Activated CD4-positive, alpha-beta memory T cell treated with anti-CD3 and anti-CD28 coated beads, Interleukin-2, amount 10 ng/mL, durations not matched to agents 7 days and 5 days (primary cell): ENCODE measurements at regions of chr4 and their contacts with region 1.

Region 1: DNA sequence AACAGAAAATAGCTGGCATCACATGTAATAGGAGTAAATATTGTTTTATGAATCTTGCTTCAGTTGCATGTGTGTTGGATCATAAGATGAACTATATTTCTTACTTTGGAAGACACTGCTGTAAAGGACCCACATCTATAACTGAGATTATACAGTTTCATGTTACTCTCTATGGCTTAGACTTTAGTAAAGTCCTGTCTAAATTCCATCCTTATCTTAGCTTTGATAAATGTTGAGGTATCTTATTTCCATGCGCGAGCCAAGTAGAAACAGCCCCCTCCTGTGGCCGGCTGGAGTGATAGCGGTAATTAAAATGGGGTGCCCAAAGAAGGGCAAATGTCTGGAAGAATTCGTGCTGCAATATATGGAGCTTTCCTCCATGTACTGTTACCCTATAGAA is 43.0 kb downstream of the CCDC158 start:
- DNase-seq: peak; percentile 64
- H3K4me3 Mint-ChIP-seq: no peak overlapping the region
- H3K27ac Mint-ChIP-seq: no peak overlapping the region
- H3K4me1 Mint-ChIP-seq: no peaks in the 10 kb centered on the region
- H3K27me3 Mint-ChIP-seq: peaks cover 3% of the 10 kb centered on the region

Region 2: GRCh38 chr4:76179398-76180318 is 198.3 kb before region 1 on chr4:
- CTCF ChIA-PET with region 1: interaction called, 238 read pairs
- POLR2A ChIA-PET with region 1: interaction called, 3 read pairs
- DNase-seq: peak; percentile 84
- H3K4me3 Mint-ChIP-seq: no peak overlapping the region
- H3K27ac Mint-ChIP-seq: no peak overlapping the region
- H3K4me1 Mint-ChIP-seq: no peaks in the 10 kb centered on the region
- H3K27me3 Mint-ChIP-seq: no peaks in the 10 kb centered on the region

Region 3: GRCh38 chr4:76213415-76214176 is 164.3 kb before region 1 on chr4 and contains the start of gene SCARB2:
- CTCF ChIA-PET with region 1: interaction called, 10 read pairs
- POLR2A ChIA-PET with region 1: interaction called, 3 read pairs
- DNase-seq: peak; percentile 76
- H3K4me3 Mint-ChIP-seq: peak within 1 kb of the TSS; percentile 79
- H3K27ac Mint-ChIP-seq: peak within 1 kb of the TSS; percentile 61
- H3K4me1 Mint-ChIP-seq: peaks cover 34% of the 10 kb centered on the region
- H3K27me3 Mint-ChIP-seq: no peaks in the 10 kb centered on the region
- total RNA-seq, gene SCARB2: 22.3 to 23.2 TPM

Region 4: GRCh38 chr4:76251441-76252270 is 126.3 kb before region 1 on chr4 and contains the start of gene FAM47E:
- CTCF ChIA-PET with region 1: interaction called, 13 read pairs
- POLR2A ChIA-PET with region 1: no interaction called
- DNase-seq: peak; percentile 49
- H3K4me3 Mint-ChIP-seq: peak within 1 kb of the TSS; percentile 70
- H3K27ac Mint-ChIP-seq: no peak within 1 kb of the TSS
- H3K4me1 Mint-ChIP-seq: peaks cover 10% of the 10 kb centered on the region
- H3K27me3 Mint-ChIP-seq: peaks cover 69% of the 10 kb centered on the region
- total RNA-seq, gene FAM47E: not detected

Region 5: GRCh38 chr4:76305971-76306881 is 71.7 kb before region 1 on chr4 and contains the start of gene STBD1:
- CTCF ChIA-PET with region 1: interaction called, 31 read pairs
- POLR2A ChIA-PET with region 1: interaction called, 4 read pairs
- DNase-seq: peak; percentile 55
- H3K4me3 Mint-ChIP-seq: peak within 1 kb of the TSS; percentile 78
- H3K27ac Mint-ChIP-seq: peak within 1 kb of the TSS; percentile 84
- H3K4me1 Mint-ChIP-seq: peaks cover 49% of the 10 kb centered on the region
- H3K27me3 Mint-ChIP-seq: no peaks in the 10 kb centered on the region
- total RNA-seq, gene STBD1: 5.5 to 5.8 TPM

Region 6: GRCh38 chr4:76354517-76355473 is 23.1 kb before region 1 on chr4:
- CTCF ChIA-PET with region 1: interaction called, 11 read pairs
- POLR2A ChIA-PET with region 1: no interaction called
- DNase-seq: peak; percentile 66
- H3K4me3 Mint-ChIP-seq: peak overlapping the region; percentile 5
- H3K27ac Mint-ChIP-seq: peak overlapping the region; percentile 10
- H3K4me1 Mint-ChIP-seq: peaks cover 22% of the 10 kb centered on the region
- H3K27me3 Mint-ChIP-seq: peaks cover 15% of the 10 kb centered on the region

Region 7: GRCh38 chr4:76388160-76388908 is 10.4 kb after region 1 on chr4:
- CTCF ChIA-PET with region 1: interaction called, 12 read pairs
- POLR2A ChIA-PET with region 1: no interaction called
- DNase-seq: no peak
- H3K4me3 Mint-ChIP-seq: no peak overlapping the region
- H3K27ac Mint-ChIP-seq: no peak overlapping the region
- H3K4me1 Mint-ChIP-seq: no peaks in the 10 kb centered on the region
- H3K27me3 Mint-ChIP-seq: peaks cover 55% of the 10 kb centered on the region

Region 8: GRCh38 chr4:76485450-76485849 is 107.5 kb after region 1 on chr4:
- CTCF ChIA-PET with region 1: no interaction called
- POLR2A ChIA-PET with region 1: no interaction called
- DNase-seq: no peak
- H3K4me3 Mint-ChIP-seq: no peak overlapping the region
- H3K27ac Mint-ChIP-seq: no peak overlapping the region
- H3K4me1 Mint-ChIP-seq: no peaks in the 10 kb centered on the region
- H3K27me3 Mint-ChIP-seq: peaks cover 19% of the 10 kb centered on the region